CD4-positive, alpha-beta T cell (primary cell): ENCODE measurements at regions of chr10 and their contacts with region 1.

Region 1: DNA sequence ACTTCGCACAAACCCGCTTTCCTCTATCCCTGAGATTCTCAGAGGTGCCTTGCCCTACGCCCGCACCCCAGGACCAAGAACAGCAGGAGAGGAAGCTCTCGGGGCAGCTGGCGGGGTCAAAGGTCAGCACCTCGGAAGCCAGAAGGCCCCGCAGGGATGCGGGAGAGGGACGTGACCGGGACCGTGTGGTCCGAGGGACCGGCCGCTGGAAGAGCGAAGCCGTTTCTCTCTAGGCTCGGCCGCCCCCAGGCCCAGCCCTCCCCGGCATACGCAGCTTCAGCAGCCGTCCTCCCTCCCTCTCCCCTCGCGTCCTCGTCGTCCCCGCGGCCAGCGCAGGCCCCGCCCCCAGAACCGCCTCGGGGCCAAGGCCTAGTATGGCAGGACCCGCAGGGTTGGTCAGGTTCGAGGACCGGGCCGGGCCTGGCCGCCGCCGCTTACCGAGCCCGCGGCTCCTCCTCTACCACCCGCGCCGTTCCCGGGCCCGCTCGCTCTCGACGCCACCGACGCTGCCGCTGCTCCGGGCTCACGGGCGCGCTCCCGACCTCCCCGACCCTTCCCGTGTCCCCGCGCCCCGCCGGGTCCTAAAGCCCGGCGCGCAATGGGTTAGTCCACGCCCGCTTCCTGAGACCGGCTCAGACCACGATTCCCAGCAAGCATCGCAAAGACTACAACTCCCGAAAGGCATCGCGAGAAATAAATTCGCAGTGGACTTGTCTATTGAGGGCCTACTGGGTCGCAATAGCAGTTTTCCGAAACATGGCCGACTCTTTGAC is at the start of gene ARMH3:
- DNase-seq: peak; percentile 75 to 96 (median 84)
- ATAC-seq: peak; percentile 93
- H3K4me3 ChIP-seq: peak within 1 kb of the TSS; percentile 84
- H3K4me3 Mint-ChIP-seq: peak within 1 kb of the TSS; percentile 96
- H3K27ac ChIP-seq: peak within 1 kb of the TSS; percentile 70 to 83
- H3K27ac Mint-ChIP-seq: peak within 1 kb of the TSS; percentile 87
- H3K4me1 ChIP-seq: peaks cover 48% of the 10 kb centered on the region
- H3K4me1 Mint-ChIP-seq: peaks cover 45% of the 10 kb centered on the region
- H3K27me3 ChIP-seq: no peaks in the 10 kb centered on the region
- H3K27me3 Mint-ChIP-seq: no peaks in the 10 kb centered on the region
- CTCF ChIP-seq: no peak
- total RNA-seq, gene ARMH3: 17.7 to 18.9 TPM

Region 2: DNA sequence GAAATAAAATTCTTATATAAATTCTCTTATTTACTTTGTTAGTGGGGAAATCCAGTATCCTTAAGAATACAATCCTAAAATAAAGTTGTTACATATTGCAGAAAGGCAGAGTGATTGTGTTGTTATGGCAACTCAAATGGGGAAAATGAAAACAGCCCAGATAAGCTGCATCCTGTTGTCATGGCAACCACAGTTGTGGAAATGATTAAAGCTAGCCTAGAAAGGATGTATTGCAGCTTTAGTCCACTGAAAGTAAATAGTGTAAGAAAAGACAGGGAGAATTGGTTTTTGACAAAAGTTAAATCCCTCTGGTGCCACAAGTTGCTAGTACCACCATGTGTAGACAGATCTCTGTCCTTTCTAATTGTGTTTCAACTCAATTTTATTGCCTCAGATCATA is 658.7 kb before region 1 on chr10:
- CTCF ChIA-PET with region 1: no interaction called
- POLR2A ChIA-PET with region 1: no interaction called
- intact Hi-C with region 1: no loop called
- DNase-seq: peak in 8 of 14 experiments; percentile 7 to 85 (median 32)
- ATAC-seq: peak; percentile 83
- H3K4me3 ChIP-seq: no peak overlapping the region
- H3K4me3 Mint-ChIP-seq: no peak overlapping the region
- H3K27ac ChIP-seq: no peak overlapping the region
- H3K27ac Mint-ChIP-seq: peak overlapping the region; percentile 46
- H3K4me1 ChIP-seq: peaks cover 8% of the 10 kb centered on the region
- H3K4me1 Mint-ChIP-seq: peaks cover 52% of the 10 kb centered on the region
- H3K27me3 ChIP-seq: no peaks in the 10 kb centered on the region
- H3K27me3 Mint-ChIP-seq: no peaks in the 10 kb centered on the region
- CTCF ChIP-seq: no peak

Region 3: GRCh38 chr10:102853944-102854694 is 798.3 kb after region 1 on chr10 and contains the start of gene BORCS7:
- CTCF ChIA-PET with region 1: no interaction called
- POLR2A ChIA-PET with region 1: no interaction called
- intact Hi-C with region 1: loop called in 1 of 2 experiments (anchors 10 kb)
- DNase-seq: peak; percentile 70 to 94 (median 78)
- ATAC-seq: peak; percentile 99
- H3K4me3 ChIP-seq: peak within 1 kb of the TSS; percentile 98
- H3K4me3 Mint-ChIP-seq: peak within 1 kb of the TSS; percentile 85
- H3K27ac ChIP-seq: peak within 1 kb of the TSS; percentile 87 to 97
- H3K27ac Mint-ChIP-seq: peak within 1 kb of the TSS; percentile 96
- H3K4me1 ChIP-seq: peaks cover 15% of the 10 kb centered on the region
- H3K4me1 Mint-ChIP-seq: peaks cover 16% of the 10 kb centered on the region
- H3K27me3 ChIP-seq: no peaks in the 10 kb centered on the region
- H3K27me3 Mint-ChIP-seq: no peaks in the 10 kb centered on the region
- CTCF ChIP-seq: no peak
- total RNA-seq, gene BORCS7: 10.6 to 11.6 TPM